Endothelial cell of umbilical vein (primary cell): ENCODE measurements at regions of chr12 and their contacts with region 1.

Region 1: GRCh38 chr12:7806863-7807487 is 17.8 kb downstream of the NANOG start:
- DNase-seq: peak; percentile 88
- H3K4me3 ChIP-seq: no peak overlapping the region
- H3K27ac ChIP-seq: no peak overlapping the region
- H3K4me1 ChIP-seq: no peaks in the 10 kb centered on the region
- H3K27me3 ChIP-seq: no peaks in the 10 kb centered on the region
- CTCF ChIP-seq: peak; percentile 81 to 92
- POLR2A ChIP-seq: no peak

Region 2: DNA sequence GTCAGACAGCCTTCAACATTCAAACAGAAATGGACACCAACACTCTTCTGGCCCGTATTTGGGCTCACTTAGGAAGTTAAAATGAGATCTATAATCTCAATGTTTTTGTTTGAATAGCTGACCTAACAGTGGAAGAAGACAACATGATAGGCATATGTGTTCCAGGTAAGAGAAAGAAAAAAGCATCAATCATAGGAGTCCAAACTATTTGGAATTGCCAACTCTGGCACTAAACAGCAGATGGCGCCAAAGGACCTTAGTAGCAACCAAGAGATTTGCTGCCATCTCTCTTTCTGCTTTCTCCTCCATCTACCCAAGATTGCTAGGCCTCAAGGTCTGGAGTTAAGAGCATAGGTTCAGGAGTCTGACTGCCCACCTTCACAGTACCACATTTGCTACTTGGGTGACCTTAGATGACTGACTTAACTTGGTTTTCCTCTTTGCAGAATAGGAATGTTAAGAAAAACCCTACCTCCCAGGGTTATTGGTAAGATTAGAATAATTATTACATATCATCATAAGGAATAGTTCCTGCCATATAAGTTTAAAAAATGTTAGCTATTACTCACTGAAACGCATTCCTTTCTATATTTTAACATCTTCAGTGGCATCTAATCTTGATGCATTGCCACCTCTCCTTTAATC is 587.3 kb before region 1 on chr12:
- CTCF ChIA-PET with region 1: no interaction called
- POLR2A ChIA-PET with region 1: no interaction called
- dilution Hi-C with region 1: no loop called
- intact Hi-C with region 1: loop called (anchors 5 kb)
- DNase-seq: peak; percentile 71
- H3K4me3 ChIP-seq: no peak overlapping the region
- H3K27ac ChIP-seq: no peak overlapping the region
- H3K4me1 ChIP-seq: no peaks in the 10 kb centered on the region
- H3K27me3 ChIP-seq: peaks cover 0 to 1% of the 10 kb centered on the region in 2 experiments
- CTCF ChIP-seq: peak; percentile 74 to 75
- POLR2A ChIP-seq: no peak

Region 3: DNA sequence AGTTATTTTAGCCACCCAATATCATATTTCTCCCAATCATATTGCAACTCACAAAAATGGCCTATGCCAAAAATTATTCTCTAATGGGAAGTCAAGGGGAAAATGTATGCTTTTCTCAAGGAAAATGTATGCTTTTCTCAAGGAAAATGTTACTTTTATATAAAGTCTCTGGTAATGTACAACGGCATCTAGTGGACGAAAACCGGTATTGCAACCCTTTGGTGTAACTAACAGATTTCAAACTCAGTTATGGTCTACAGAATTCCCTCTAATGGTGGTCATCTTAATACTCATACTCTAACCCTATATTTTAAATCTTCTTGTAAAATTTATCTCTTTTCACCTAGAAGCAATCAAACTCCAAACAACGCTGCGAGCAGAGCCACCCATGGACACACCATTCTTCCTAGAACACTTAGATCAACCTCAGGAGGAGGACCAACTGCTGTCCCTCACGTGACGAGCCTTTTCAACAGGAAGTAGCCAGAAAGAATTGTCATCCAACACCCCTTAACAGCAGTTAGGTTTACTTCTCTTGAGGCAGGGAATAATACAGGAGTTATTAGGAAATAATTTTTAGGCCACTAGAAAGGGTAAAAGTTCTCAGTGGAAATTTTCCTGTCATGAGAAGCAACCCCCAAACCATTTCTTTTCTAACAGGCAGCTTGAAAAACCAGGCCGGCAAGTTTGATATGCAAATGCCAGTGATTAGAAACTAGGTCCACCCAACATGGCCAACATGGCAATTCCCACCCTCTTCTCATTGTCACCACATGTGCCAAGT is 161.4 kb before region 1 on chr12:
- CTCF ChIA-PET with region 1: interaction called, 59 read pairs
- POLR2A ChIA-PET with region 1: no interaction called
- dilution Hi-C with region 1: no loop called
- intact Hi-C with region 1: loop called (anchors 1 kb)
- DNase-seq: peak; percentile 34
- H3K4me3 ChIP-seq: no peak overlapping the region
- H3K27ac ChIP-seq: no peak overlapping the region
- H3K4me1 ChIP-seq: no peaks in the 10 kb centered on the region
- H3K27me3 ChIP-seq: peaks cover 0 to 3% of the 10 kb centered on the region in 2 experiments
- CTCF ChIP-seq: peak; percentile 44 to 73
- POLR2A ChIP-seq: no peak

Region 4: GRCh38 chr12:7678738-7679137 is 128.2 kb before region 1 on chr12:
- CTCF ChIA-PET with region 1: interaction called, 141 read pairs
- POLR2A ChIA-PET with region 1: no interaction called
- dilution Hi-C with region 1: no loop called
- intact Hi-C with region 1: loop called (anchors 1 kb)
- DNase-seq: peak; percentile 23
- H3K4me3 ChIP-seq: no peak overlapping the region
- H3K27ac ChIP-seq: no peak overlapping the region
- H3K4me1 ChIP-seq: peaks cover 3% of the 10 kb centered on the region
- H3K27me3 ChIP-seq: peaks cover 0 to 6% of the 10 kb centered on the region in 2 experiments
- CTCF ChIP-seq: no peak
- POLR2A ChIP-seq: no peak

Region 5: DNA sequence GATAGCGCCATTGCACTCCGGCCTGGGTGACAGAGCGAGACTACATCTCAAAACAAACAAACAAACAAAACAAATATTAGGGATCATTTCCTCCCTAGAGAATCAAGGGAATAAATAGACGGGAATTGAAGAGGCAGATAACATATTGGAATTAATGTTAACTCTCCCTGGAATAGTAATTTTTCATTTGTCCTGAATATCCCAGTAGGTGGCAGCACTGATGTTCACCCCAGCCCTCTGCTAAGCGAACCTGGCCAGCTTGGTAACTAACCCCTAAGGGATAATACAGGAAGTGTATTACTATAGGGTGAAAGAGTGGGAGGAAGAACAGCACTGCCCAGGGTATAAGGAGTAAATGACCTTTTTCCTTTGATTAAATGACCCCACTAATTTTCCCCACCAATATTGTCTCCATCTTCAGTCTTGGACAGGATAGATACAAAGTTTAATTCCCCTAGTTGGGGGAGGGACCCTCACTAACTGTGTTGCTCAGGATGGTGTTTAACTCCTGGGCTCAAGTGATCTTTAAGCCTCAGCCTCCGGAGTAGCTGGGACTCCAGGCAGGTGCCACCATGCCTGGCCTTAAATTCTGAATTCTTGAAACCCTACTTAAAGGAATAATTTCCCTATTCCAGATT is 25.2 kb after region 1 on chr12:
- CTCF ChIA-PET with region 1: interaction called, 13 read pairs
- POLR2A ChIA-PET with region 1: no interaction called
- dilution Hi-C with region 1: no loop called
- intact Hi-C with region 1: no loop called
- DNase-seq: peak; percentile 58
- H3K4me3 ChIP-seq: no peak overlapping the region
- H3K27ac ChIP-seq: no peak overlapping the region
- H3K4me1 ChIP-seq: no peaks in the 10 kb centered on the region
- H3K27me3 ChIP-seq: peaks cover 0 to 2% of the 10 kb centered on the region in 2 experiments
- CTCF ChIP-seq: peak; percentile 44 to 45
- POLR2A ChIP-seq: no peak

Region 6: GRCh38 chr12:7859552-7859951 is 52.6 kb after region 1 on chr12:
- CTCF ChIA-PET with region 1: no interaction called
- POLR2A ChIA-PET with region 1: no interaction called
- dilution Hi-C with region 1: no loop called
- intact Hi-C with region 1: no loop called
- DNase-seq: no peak
- H3K4me3 ChIP-seq: no peak overlapping the region
- H3K27ac ChIP-seq: no peak overlapping the region
- H3K4me1 ChIP-seq: no peaks in the 10 kb centered on the region
- H3K27me3 ChIP-seq: no peaks in the 10 kb centered on the region
- CTCF ChIP-seq: no peak
- POLR2A ChIP-seq: no peak

Region 7: DNA sequence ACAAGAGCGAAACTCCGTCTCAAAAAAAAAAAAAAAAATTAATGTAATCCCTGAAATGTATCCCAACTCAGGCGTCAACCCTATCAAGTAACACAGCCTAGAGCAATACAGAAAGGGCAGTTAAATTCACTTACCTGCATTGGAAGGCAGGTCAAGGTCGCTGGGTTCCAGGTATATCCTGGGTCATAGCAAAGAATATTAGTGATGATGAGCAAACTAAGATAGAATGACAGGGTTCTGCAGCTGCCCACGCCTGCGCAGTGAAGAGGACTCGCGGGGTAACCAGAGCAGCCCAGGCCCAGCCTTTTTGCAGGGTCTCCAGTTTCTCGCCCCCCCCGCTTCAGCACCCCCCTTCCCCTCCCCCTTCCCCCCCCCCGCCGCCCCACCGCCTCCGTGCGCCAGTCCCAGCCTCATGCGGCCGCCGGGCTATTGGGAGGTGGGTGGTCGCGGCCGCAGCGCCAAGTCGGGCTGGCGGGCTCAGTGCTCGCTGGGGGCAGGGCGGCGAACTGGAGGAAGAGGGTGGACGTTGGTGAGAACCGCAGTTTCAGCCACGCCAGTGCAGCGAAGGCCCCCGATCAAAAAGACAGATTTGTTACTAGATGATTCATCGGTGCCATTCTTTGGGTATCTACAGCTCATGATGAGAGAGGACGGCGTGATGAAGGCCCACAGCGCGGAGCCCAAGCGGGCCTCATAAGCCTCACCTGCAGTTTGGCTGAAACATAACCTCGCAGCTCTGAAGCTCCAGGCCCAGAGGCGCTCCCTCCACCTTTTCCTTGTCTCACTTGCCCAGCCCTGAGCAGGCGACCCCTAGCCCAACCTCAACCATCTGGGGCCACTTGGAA is 108.8 kb after region 1 on chr12:
- CTCF ChIA-PET with region 1: no interaction called
- POLR2A ChIA-PET with region 1: no interaction called
- dilution Hi-C with region 1: no loop called
- intact Hi-C with region 1: no loop called
- DNase-seq: no peak
- H3K4me3 ChIP-seq: no peak overlapping the region
- H3K27ac ChIP-seq: no peak overlapping the region
- H3K4me1 ChIP-seq: no peaks in the 10 kb centered on the region
- H3K27me3 ChIP-seq: no peaks in the 10 kb centered on the region
- CTCF ChIP-seq: no peak
- POLR2A ChIP-seq: no peak